ENCODE measurements at regions of chr13 and their contacts with region 1.

Region 1: DNA sequence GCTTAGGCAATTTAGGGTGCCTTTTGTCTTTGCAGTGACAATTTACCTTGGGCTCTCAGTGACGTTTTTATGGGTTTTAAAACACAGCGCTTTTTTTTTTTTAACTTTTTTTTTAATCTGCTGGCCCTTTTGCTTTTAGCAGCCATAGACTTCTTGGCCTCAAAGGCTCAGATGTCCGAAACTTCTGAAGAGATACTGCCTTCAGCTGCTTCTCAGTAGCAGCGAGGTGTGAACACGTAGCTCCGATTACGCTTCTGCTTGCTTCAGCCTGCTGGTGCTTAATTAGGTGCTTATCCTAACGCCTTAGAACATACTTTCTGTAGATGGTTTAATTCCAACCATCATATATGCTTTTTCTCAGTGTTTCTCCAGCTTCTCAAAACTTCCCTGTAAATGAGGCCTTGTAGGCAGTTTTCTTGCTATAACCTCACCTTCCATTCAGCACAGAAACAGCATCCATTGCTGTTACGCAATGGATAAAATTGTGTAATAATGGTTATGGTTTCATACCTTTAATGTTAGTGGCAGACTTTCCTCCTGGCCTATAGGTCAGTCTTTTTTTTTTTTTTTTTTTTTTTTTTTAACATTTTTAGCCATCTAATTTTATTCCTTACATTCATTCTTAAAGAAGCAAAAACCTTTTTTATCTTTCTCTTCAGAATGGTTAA is 723.9 kb downstream of the GPC5 start:
- DNase-seq: peak; percentile 1
- H3K4me3 ChIP-seq: no peak overlapping the region
- H3K27ac ChIP-seq: no peak overlapping the region
- H3K4me1 ChIP-seq: no peaks in the 10 kb centered on the region
- H3K27me3 ChIP-seq: no peaks in the 10 kb centered on the region
- CTCF ChIP-seq: no peak

Region 2: GRCh38 chr13:92097337-92097903 is 24.9 kb before region 1 on chr13:
- CTCF ChIA-PET with region 1: no interaction called
- dilution Hi-C with region 1: no loop called
- in situ Hi-C with region 1: no loop called
- intact Hi-C with region 1: loop called (anchors 2 kb)
- DNase-seq: no peak
- H3K4me3 ChIP-seq: no peak overlapping the region
- H3K27ac ChIP-seq: no peak overlapping the region
- H3K4me1 ChIP-seq: no peaks in the 10 kb centered on the region
- H3K27me3 ChIP-seq: no peaks in the 10 kb centered on the region
- CTCF ChIP-seq: no peak